ENCODE measurements at regions of chr20 and their contacts with region 1.

Region 1: GRCh38 chr20:38472513-38473372 is at the start of gene RALGAPB:
- DNase-seq: peak; percentile 98
- H3K4me3 Mint-ChIP-seq: peak within 1 kb of the TSS; percentile 79
- H3K27ac Mint-ChIP-seq: peak within 1 kb of the TSS; percentile 66
- H3K4me1 Mint-ChIP-seq: peaks cover 42% of the 10 kb centered on the region
- H3K27me3 Mint-ChIP-seq: peaks cover 10% of the 10 kb centered on the region
- total RNA-seq, gene RALGAPB: 30.5 to 31.3 TPM

Region 2: GRCh38 chr20:38446441-38447209 is 26.1 kb before region 1 on chr20:
- CTCF ChIA-PET with region 1: interaction called, 31 read pairs
- POLR2A ChIA-PET with region 1: interaction called, 32 read pairs
- DNase-seq: peak; percentile 93
- H3K4me3 Mint-ChIP-seq: peak overlapping the region; percentile 74
- H3K27ac Mint-ChIP-seq: peak overlapping the region; percentile 77
- H3K4me1 Mint-ChIP-seq: peaks cover 29% of the 10 kb centered on the region
- H3K27me3 Mint-ChIP-seq: peaks cover 9% of the 10 kb centered on the region

Region 3: GRCh38 chr20:38497246-38497935 is 24.6 kb after region 1 on chr20:
- CTCF ChIA-PET with region 1: interaction called, 3 read pairs
- POLR2A ChIA-PET with region 1: interaction called, 12 read pairs
- DNase-seq: no peak
- H3K4me3 Mint-ChIP-seq: no peak overlapping the region
- H3K27ac Mint-ChIP-seq: no peak overlapping the region
- H3K4me1 Mint-ChIP-seq: no peaks in the 10 kb centered on the region
- H3K27me3 Mint-ChIP-seq: no peaks in the 10 kb centered on the region